ENCODE measurements at regions of chr13 and their contacts with region 1.

Region 1: DNA sequence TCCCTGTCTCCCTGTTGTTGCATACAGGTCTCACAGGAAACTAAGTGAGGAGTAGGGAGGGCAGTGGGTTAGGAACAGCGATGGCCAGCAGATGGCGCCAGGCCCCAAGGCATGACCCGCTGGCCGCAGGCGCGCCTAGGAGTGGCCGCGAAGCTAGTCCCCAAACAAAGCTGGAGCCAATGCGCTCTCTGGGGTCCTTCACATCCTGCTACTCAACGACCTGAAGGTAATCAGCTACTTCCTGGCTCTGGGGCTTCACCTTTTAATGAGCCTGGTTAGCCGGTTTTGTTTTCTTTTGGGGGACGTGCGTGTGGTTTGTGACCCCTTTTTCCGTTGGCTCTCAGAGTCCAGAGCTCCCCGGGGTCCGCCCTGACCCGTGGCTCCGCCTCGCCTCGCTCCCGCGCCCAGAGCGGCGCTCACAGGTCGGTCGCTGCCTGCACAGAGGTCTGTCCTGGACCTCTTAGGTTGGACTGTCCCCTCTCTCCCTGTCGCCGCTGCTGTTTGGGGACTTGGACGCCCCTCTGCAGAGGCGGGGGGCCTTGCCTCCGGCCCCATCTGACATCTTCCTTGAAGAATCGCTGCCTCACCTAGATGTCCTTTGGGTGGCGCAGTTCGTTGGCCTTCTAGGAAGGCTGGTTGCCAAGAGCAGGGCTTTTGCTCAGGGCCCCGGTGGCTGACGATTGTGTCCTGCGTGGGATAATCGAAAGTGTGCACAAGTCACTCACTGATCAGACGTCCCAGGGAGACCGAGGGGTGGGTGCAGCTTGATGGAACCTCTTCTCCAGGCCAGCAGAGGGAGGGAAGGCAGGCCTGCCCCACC is 62.1 kb upstream of the GTF3A start:
- DNase-seq: peak; percentile 71 to 97
- H3K4me3 ChIP-seq: no peak overlapping the region
- CTCF ChIP-seq: peak in 1 of 3 donors; percentile 41
- POLR2A ChIP-seq: no peak

Region 2: GRCh38 chr13:26228096-26228495 is 1134.2 kb before region 1 on chr13:
- intact Hi-C with region 1: no loop called
- DNase-seq: no peak
- H3K4me3 ChIP-seq: no peak overlapping the region
- CTCF ChIP-seq: no peak
- POLR2A ChIP-seq: no peak

Region 3: GRCh38 chr13:26721251-26722121 is 640.8 kb before region 1 on chr13:
- intact Hi-C with region 1: no loop called
- DNase-seq: peak; percentile 22 to 89
- H3K4me3 ChIP-seq: no peak overlapping the region
- CTCF ChIP-seq: no peak
- POLR2A ChIP-seq: no peak

Region 4: DNA sequence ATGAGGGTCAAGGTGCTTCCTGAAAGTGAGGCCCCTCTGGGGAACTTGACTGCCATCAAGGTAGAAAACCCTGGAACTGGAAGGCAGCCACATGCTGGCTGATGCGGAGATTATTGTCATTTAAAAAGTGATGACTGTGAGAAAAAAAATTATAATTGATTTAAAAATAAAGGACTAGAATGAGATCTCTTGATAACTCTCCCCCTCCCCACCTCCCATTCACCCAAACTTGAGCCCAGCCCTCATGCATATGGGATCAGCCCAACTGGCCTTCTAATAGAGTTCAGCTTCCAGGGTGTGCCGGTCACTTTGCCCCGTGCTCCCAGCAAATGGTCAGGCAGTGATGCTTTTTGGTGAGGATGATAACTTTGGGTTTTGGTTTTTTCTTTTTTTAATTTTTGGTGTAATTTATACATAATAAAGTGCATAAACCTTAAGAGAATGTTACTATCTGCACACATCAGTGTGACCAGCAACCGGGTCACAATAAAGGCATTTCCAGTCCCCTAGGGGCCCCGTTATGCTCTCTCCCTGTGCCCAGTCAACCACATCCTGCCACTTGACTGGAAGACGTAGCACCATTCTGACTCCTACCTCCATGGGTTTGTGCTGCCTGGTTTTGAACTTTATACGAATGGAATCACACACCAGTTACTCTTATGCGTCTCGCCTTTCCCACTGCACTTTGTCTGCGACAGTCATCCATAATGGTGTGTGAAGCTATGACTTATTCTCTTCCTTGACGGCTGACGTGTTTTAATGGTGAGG is 378.5 kb before region 1 on chr13:
- intact Hi-C with region 1: loop called (anchors 2 kb)
- DNase-seq: no peak
- H3K4me3 ChIP-seq: no peak overlapping the region
- CTCF ChIP-seq: no peak
- POLR2A ChIP-seq: no peak

Region 5: DNA sequence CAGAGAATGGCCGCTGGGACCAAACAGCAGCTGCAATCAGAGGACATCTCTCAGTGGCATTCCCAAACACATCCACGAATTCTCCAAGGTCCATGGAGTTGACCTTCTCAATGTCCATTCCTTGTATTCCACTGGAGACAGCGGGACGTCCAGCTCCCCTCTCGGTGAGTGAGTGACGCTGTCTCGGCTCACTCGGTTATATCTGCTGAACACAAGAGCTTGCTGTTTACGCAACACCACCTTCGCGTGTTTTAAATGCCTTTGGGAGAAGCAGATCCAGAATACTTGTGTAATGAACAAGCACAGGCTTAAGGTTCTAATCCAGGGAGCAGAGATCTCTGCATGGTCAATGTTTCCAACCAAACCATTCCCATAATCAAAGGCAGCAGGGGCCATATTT is 626.2 kb after region 1 on chr13 and contains the start of gene URAD:
- intact Hi-C with region 1: loop called (anchors 5 kb)
- DNase-seq: peak in 1 of 2 donors; percentile 49
- H3K4me3 ChIP-seq: no peak within 1 kb of the TSS
- CTCF ChIP-seq: no peak
- POLR2A ChIP-seq: no peak
- total RNA-seq, gene URAD: not detected